ENCODE measurements at regions of chr9 and their contacts with region 1.

Region 1: GRCh38 chr9:34458013-34458958 is at the starts of genes DNAI1 and FAM219A:
- DNase-seq: peak; percentile 99
- ATAC-seq: peak; percentile 92
- H3K4me3 Mint-ChIP-seq: peak within 1 kb of the TSS; percentile 84
- H3K27ac Mint-ChIP-seq: peak within 1 kb of the TSS; percentile 75
- H3K4me1 Mint-ChIP-seq: peaks cover 45% of the 10 kb centered on the region
- H3K27me3 Mint-ChIP-seq: peaks cover 9% of the 10 kb centered on the region
- total RNA-seq, gene DNAI1: 0.34 TPM in 1 of 2 experiments, not detected in the other
- total RNA-seq, gene FAM219A: 9.7 to 12.9 TPM

Region 2: DNA sequence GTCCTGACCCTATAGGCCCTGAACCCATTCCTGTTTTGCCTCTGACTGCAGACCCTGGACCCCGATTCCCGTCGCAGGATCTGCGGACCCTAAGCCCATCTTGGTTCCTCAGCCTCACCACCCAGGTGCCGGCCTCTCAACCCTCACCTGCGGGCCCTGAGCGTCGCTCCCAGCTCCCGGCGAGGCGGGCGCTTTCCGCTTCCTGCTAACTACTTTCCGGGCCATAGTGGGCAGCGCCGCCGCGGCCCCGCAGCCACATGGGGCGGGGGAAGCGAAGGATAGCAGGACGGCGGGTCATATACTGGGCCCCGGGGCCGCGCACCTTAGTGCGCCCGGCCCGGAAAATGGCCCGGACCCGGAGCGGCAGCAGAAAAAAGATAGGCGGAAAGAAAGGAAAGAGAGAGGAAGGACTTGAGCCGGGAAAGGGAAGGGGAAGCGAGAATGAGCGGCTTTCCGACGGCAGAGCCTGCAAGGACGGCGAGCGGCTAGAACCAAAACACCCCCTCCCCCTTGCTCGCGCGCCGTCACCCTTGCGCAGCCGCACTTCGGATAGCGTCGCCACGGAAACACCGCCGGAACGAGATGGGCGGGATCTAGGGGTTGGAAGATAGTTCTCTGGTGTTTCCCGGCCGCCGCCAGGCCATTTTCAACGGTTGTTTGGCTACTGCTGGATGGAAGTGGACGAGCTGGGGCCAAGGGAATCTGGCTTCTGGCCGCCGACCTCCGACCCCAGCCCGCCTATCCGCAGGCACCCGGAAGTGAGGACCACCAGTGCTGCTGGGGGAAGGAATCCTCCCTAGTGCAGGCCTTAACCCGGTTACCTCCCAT is 331.9 kb before region 1 on chr9 and contains the start of gene DCAF12:
- CTCF ChIA-PET with region 1: no interaction called
- POLR2A ChIA-PET with region 1: no interaction called
- intact Hi-C with region 1: loop called in 1 of 2 experiments (anchors 5 kb)
- DNase-seq: peak; percentile 95
- ATAC-seq: peak; percentile 97
- H3K4me3 Mint-ChIP-seq: peak within 1 kb of the TSS; percentile 95
- H3K27ac Mint-ChIP-seq: peak within 1 kb of the TSS; percentile 98
- H3K4me1 Mint-ChIP-seq: peaks cover 40% of the 10 kb centered on the region
- H3K27me3 Mint-ChIP-seq: no peaks in the 10 kb centered on the region
- total RNA-seq, gene DCAF12: 34.6 to 35.0 TPM

Region 3: GRCh38 chr9:34512131-34513078 is 54.1 kb after region 1 on chr9:
- CTCF ChIA-PET with region 1: no interaction called
- POLR2A ChIA-PET with region 1: no interaction called
- intact Hi-C with region 1: no loop called
- DNase-seq: no peak
- ATAC-seq: no peak
- H3K4me3 Mint-ChIP-seq: no peak overlapping the region
- H3K27ac Mint-ChIP-seq: no peak overlapping the region
- H3K4me1 Mint-ChIP-seq: no peaks in the 10 kb centered on the region
- H3K27me3 Mint-ChIP-seq: no peaks in the 10 kb centered on the region

Region 4: GRCh38 chr9:34522971-34523797 is 64.9 kb after region 1 on chr9 and contains the start of gene ENHO:
- CTCF ChIA-PET with region 1: no interaction called
- POLR2A ChIA-PET with region 1: no interaction called
- intact Hi-C with region 1: loop called (anchors 1 to 2 kb)
- DNase-seq: peak; percentile 93
- ATAC-seq: peak; percentile 99
- H3K4me3 Mint-ChIP-seq: peak within 1 kb of the TSS; percentile 54
- H3K27ac Mint-ChIP-seq: no peak within 1 kb of the TSS
- H3K4me1 Mint-ChIP-seq: peaks cover 24% of the 10 kb centered on the region
- H3K27me3 Mint-ChIP-seq: peaks cover 11% of the 10 kb centered on the region
- total RNA-seq, gene ENHO: not detected

Region 5: GRCh38 chr9:34620061-34620994 is 162.0 kb after region 1 on chr9 and contains the start of gene DCTN3:
- CTCF ChIA-PET with region 1: no interaction called
- POLR2A ChIA-PET with region 1: no interaction called
- intact Hi-C with region 1: loop called in 1 of 2 experiments (anchors 1 kb)
- DNase-seq: peak; percentile 95
- ATAC-seq: peak; percentile 99
- H3K4me3 Mint-ChIP-seq: peak within 1 kb of the TSS; percentile 88
- H3K27ac Mint-ChIP-seq: peak within 1 kb of the TSS; percentile 77
- H3K4me1 Mint-ChIP-seq: peaks cover 25% of the 10 kb centered on the region
- H3K27me3 Mint-ChIP-seq: peaks cover 25% of the 10 kb centered on the region
- total RNA-seq, gene DCTN3: 65.9 to 68.4 TPM

Region 6: DNA sequence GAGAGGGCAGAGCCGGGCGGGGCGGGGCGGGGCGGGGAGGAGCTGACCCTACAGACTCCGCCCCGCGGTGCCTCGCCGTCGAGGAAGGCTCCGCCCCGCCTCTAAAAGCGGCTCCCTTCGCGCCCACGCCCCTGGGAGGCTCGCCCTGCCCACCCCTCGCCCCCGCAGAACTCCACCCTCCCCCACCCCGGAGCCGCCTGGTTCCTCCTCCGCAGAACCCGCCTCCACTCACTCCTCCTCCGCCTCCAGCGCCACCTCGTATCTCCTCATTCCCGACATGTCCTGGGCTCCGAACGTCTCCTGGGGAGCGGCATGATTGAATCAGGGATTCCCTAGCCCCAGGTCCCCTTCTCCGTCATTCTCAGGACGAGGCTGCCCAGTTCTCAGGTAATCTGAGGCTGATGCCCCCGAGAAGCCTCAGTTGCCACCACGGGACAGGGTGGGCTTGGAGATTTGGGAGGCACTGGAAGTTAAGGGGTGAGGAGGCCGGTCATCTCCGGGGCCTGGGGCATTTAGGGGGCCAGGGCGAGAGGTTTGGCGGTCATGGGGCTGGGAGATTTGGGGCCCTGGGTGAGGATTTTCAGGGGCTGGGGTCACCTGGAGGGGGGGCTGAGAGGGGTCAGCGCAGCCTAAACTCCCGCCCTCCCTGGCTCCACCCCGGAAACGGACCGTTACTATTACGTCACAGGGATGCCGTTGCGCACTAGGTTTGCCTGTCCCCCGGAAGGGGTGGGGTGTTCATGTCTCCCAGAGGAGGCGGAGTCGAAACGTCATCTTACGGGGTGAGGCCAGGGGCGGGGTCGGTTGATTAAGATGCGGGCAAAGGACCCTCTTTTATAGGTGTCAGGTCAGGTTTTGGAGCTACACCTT is 207.3 kb after region 1 on chr9:
- CTCF ChIA-PET with region 1: no interaction called
- POLR2A ChIA-PET with region 1: no interaction called
- intact Hi-C with region 1: loop called (anchors 1 to 2 kb)
- DNase-seq: peak; percentile 93
- ATAC-seq: peak; percentile 75
- H3K4me3 Mint-ChIP-seq: peak overlapping the region; percentile 77
- H3K27ac Mint-ChIP-seq: peak overlapping the region; percentile 87
- H3K4me1 Mint-ChIP-seq: peaks cover 33% of the 10 kb centered on the region
- H3K27me3 Mint-ChIP-seq: no peaks in the 10 kb centered on the region